ENCODE measurements at regions of chr10 and their contacts with region 1.

Region 1: DNA sequence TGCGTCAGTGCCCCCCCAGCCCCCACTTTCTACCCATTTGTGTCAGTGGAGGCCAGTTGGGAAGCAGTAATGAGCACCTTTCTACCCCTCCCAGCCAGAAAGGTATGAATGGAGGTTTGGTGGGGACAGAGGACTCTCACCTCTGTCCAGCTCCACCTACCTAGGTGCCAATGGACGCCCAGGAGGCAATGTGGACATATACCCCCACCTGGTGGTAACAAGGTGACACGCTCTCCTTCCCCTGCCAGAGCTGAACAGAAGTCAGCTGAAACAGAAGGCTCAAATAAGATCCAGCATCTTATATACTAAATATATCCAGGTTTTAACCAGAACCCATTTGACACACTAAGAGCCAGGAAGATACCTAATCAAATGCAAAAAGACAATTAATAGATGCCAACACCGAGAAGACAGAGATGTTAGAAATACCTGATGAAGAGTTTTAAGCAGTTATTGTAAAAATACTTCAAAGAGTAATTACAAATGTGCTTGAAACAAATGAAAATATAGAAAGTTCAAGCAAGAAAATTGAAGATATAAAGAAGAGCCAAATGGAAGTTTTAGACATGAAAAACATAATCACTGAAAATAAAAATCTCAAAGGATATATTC is 18.4 kb upstream of the SORCS3 start:
- DNase-seq: peak; percentile 62
- H3K4me3 ChIP-seq: no peak overlapping the region
- H3K27ac ChIP-seq: no peak overlapping the region
- H3K4me1 ChIP-seq: no peaks in the 10 kb centered on the region
- H3K27me3 ChIP-seq: no peaks in the 10 kb centered on the region; the same call in 1 of the 2 replicates
- CTCF ChIP-seq: peak; percentile 58
- EP300 ChIP-seq: no peak
- RAD21 ChIP-seq: peak; percentile 82

Region 2: GRCh38 chr10:104521901-104522694 is 100.6 kb before region 1 on chr10:
- CTCF ChIA-PET with region 1: no interaction called
- POLR2A ChIA-PET with region 1: no interaction called
- DNase-seq: peak; percentile 63
- H3K4me3 ChIP-seq: no peak overlapping the region
- H3K27ac ChIP-seq: peak overlapping the region in 1 of 2 experiments; percentile 64; a peak in 2 of 4 replicates
- H3K4me1 ChIP-seq: peaks cover 0 to 12% of the 10 kb centered on the region in 2 experiments; a peak in 1 of 4 replicates
- H3K27me3 ChIP-seq: no peaks in the 10 kb centered on the region
- CTCF ChIP-seq: no peak
- EP300 ChIP-seq: no peak
- RAD21 ChIP-seq: peak; percentile 1

Region 3: DNA sequence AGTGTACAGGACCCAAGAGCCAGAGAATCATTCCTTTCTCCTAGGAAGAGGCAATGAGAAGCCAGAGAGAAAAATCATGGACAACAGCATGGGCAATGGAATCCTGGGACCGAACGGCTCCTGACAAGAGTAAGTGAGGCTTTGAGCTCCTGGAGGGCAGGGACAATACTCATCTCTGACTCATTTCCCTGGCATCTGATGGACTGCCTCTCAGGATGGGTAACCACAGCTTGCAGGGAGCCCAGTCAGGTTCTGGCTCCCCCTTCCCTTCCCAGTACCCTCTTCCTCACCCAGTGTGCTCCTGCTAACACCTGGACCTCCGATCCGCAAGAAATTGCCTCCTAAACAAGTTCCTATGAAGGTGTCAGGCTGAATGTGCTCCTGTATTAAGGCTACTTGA is 32.8 kb before region 1 on chr10:
- CTCF ChIA-PET with region 1: interaction called, 10 read pairs
- POLR2A ChIA-PET with region 1: no interaction called
- DNase-seq: no peak
- H3K4me3 ChIP-seq: no peak overlapping the region
- H3K27ac ChIP-seq: peak overlapping the region in 1 of 2 experiments; percentile 83; a peak in 2 of 4 replicates
- H3K4me1 ChIP-seq: peaks cover 12 to 19% of the 10 kb centered on the region in 2 experiments; a peak in 3 of 4 replicates
- H3K27me3 ChIP-seq: no peaks in the 10 kb centered on the region
- CTCF ChIP-seq: no peak
- EP300 ChIP-seq: no peak; a peak in 1 of 4 replicates
- RAD21 ChIP-seq: no peak

Region 4: GRCh38 chr10:104608091-104608828 is 14.4 kb before region 1 on chr10:
- CTCF ChIA-PET with region 1: interaction called, 12 read pairs
- POLR2A ChIA-PET with region 1: no interaction called
- DNase-seq: no peak
- H3K4me3 ChIP-seq: no peak overlapping the region
- H3K27ac ChIP-seq: no peak overlapping the region
- H3K4me1 ChIP-seq: no peaks in the 10 kb centered on the region; a peak in 1 of 4 replicates
- H3K27me3 ChIP-seq: no peaks in the 10 kb centered on the region
- CTCF ChIP-seq: no peak
- EP300 ChIP-seq: no peak
- RAD21 ChIP-seq: no peak